ENCODE measurements at regions of chr5 and their contacts with region 1.

Region 1: DNA sequence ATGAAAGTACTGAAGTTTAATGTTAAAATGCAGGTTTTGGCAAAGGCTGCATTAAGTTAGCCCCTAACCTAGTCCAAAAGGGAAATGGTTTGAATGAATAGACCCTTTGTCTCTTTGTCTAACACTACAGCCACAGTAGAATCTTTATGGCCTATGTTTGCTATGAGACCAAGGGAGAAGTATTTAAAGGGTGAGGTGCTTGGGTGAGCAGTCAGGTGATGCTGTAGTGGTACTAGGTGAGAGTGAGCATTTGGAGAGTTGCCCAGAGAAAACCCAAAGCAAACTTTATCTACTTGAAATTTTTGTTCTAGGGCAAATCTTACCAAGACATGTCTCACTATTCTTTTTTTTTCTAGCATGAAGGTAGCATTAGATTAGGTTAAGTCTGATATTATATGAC is 1961.4 kb upstream of the WWC1 start:
- DNase-seq: no peak

Region 2: DNA sequence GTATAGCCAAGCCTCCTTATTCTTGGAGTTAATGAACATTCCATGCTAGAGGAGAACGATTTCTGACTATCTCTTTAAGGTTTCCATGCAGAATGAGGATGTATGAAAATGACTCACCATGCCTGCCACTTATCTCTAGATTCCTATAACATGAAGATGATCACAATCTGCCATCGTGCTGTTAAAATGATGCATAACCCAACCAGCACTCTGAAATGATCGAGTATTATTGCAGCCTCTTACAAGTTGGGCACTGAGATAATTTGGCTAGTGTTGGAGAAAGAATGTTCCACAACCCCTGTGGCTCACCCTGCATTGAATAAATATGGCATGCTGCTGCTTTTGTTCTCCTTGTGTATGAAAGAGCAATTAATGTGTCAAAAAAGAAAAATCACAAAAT is 817.8 kb after region 1 on chr5:
- intact Hi-C with region 1: loop called in 1 of 2 experiments (anchors 5 kb)
- DNase-seq: no peak

Measured in posterior vena cava (tissue), 2 donors.